ENCODE measurements at regions of chr15 and their contacts with region 1.

Region 1: GRCh38 chr15:68875377-68876116 is 54.8 kb upstream of the SPESP1 start:
- DNase-seq: peak; percentile 93
- H3K4me3 Mint-ChIP-seq: peak overlapping the region; percentile 33
- H3K27ac Mint-ChIP-seq: no peak overlapping the region
- H3K4me1 Mint-ChIP-seq: no peaks in the 10 kb centered on the region
- H3K27me3 Mint-ChIP-seq: peaks cover 11% of the 10 kb centered on the region
- CTCF ChIP-seq: peak; percentile 85

Region 2: DNA sequence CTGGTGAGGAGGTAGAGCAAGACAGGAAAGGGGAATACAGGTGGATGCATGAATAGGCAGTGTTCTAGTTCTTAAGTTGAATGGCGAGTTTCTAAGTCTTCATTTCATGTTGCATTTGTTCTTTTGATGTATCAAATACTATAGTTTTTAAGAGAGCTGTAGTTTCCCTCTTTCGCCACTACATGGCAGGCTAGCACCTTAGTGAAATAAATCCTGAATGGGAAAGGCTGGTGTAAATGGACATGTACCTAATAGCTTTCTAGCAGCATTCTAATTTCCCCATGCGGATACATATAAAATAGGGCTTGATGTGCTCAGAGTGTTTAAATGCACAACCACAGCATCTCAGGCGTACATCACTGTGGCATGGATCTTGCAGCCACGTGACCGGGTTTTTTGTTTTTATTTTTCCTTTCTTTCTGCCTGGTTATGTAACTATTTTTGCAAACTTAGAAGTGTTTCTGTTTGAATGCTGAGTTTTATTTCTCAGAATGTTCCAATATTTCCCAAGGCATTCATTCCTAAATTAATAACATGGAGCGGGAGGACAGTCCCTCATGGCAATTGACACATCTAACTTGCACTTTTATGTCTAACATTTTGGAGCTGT is 622.5 kb before region 1 on chr15:
- CTCF ChIA-PET with region 1: interaction called, 5 read pairs
- POLR2A ChIA-PET with region 1: no interaction called
- intact Hi-C with region 1: loop called (anchors 5 kb)
- DNase-seq: peak; percentile 89
- H3K4me3 Mint-ChIP-seq: no peak overlapping the region
- H3K27ac Mint-ChIP-seq: no peak overlapping the region
- H3K4me1 Mint-ChIP-seq: no peaks in the 10 kb centered on the region
- H3K27me3 Mint-ChIP-seq: no peaks in the 10 kb centered on the region
- CTCF ChIP-seq: peak; percentile 68

Region 3: GRCh38 chr15:68550481-68551295 is 324.9 kb before region 1 on chr15:
- CTCF ChIA-PET with region 1: interaction called, 51 read pairs
- POLR2A ChIA-PET with region 1: interaction called, 3 read pairs
- intact Hi-C with region 1: loop called (anchors 1 kb)
- DNase-seq: peak; percentile 72
- H3K4me3 Mint-ChIP-seq: no peak overlapping the region
- H3K27ac Mint-ChIP-seq: no peak overlapping the region
- H3K4me1 Mint-ChIP-seq: no peaks in the 10 kb centered on the region
- H3K27me3 Mint-ChIP-seq: peaks cover 20% of the 10 kb centered on the region
- CTCF ChIP-seq: peak; percentile 84

Region 4: GRCh38 chr15:68730471-68730919 is 145.1 kb before region 1 on chr15:
- CTCF ChIA-PET with region 1: interaction called, 20 read pairs
- POLR2A ChIA-PET with region 1: interaction called, 5 read pairs
- intact Hi-C with region 1: loop called (anchors 1 kb)
- DNase-seq: peak; percentile 53
- H3K4me3 Mint-ChIP-seq: no peak overlapping the region
- H3K27ac Mint-ChIP-seq: no peak overlapping the region
- H3K4me1 Mint-ChIP-seq: no peaks in the 10 kb centered on the region
- H3K27me3 Mint-ChIP-seq: no peaks in the 10 kb centered on the region
- CTCF ChIP-seq: peak; percentile 61

Region 5: GRCh38 chr15:68783226-68784058 is 92.1 kb before region 1 on chr15:
- CTCF ChIA-PET with region 1: interaction called, 13 read pairs
- POLR2A ChIA-PET with region 1: no interaction called
- intact Hi-C with region 1: loop called (anchors 5 kb)
- DNase-seq: peak; percentile 46
- H3K4me3 Mint-ChIP-seq: no peak overlapping the region
- H3K27ac Mint-ChIP-seq: no peak overlapping the region
- H3K4me1 Mint-ChIP-seq: no peaks in the 10 kb centered on the region
- H3K27me3 Mint-ChIP-seq: no peaks in the 10 kb centered on the region
- CTCF ChIP-seq: peak; percentile 51

Region 6: GRCh38 chr15:68924866-68925560 is 49.5 kb after region 1 on chr15:
- CTCF ChIA-PET with region 1: interaction called, 16 read pairs
- POLR2A ChIA-PET with region 1: interaction called, 13 read pairs
- intact Hi-C with region 1: loop called (anchors 2 kb)
- DNase-seq: peak; percentile 83
- H3K4me3 Mint-ChIP-seq: no peak overlapping the region
- H3K27ac Mint-ChIP-seq: no peak overlapping the region
- H3K4me1 Mint-ChIP-seq: peaks cover 10% of the 10 kb centered on the region
- H3K27me3 Mint-ChIP-seq: peaks cover 11% of the 10 kb centered on the region
- CTCF ChIP-seq: peak; percentile 87

Region 7: DNA sequence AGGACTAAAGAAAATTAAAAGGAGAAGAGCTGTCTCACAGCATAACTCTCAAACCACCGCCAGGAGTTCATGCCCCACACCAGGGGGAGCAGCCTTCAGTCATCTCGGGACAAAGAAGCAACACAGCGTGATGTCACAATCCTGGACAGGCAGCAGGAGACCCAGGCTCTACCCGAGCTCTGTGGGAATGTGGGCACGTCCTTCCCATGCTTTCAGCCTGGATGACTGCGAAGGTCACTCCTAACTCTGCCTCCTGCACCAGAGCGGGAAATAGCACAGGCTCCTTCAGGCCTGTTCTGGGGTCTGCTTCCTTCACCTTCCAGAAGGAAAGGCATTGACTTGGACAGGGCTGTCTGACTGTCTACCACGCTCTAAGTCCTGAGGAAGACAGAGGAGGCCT is 170.3 kb after region 1 on chr15:
- CTCF ChIA-PET with region 1: no interaction called
- POLR2A ChIA-PET with region 1: no interaction called
- intact Hi-C with region 1: no loop called
- DNase-seq: peak; percentile 92
- H3K4me3 Mint-ChIP-seq: peak overlapping the region; percentile 66
- H3K27ac Mint-ChIP-seq: peak overlapping the region; percentile 93
- H3K4me1 Mint-ChIP-seq: peaks cover 32% of the 10 kb centered on the region
- H3K27me3 Mint-ChIP-seq: no peaks in the 10 kb centered on the region
- CTCF ChIP-seq: peak; percentile 26

Region 8: GRCh38 chr15:69060041-69060481 is 184.5 kb after region 1 on chr15:
- CTCF ChIA-PET with region 1: no interaction called
- POLR2A ChIA-PET with region 1: no interaction called
- intact Hi-C with region 1: no loop called
- DNase-seq: no peak
- H3K4me3 Mint-ChIP-seq: no peak overlapping the region
- H3K27ac Mint-ChIP-seq: no peak overlapping the region
- H3K4me1 Mint-ChIP-seq: no peaks in the 10 kb centered on the region
- H3K27me3 Mint-ChIP-seq: no peaks in the 10 kb centered on the region
- CTCF ChIP-seq: no peak